Endothelial cell of umbilical vein (primary cell): ENCODE measurements at regions of chr15 and their contacts with region 1.

Region 1: DNA sequence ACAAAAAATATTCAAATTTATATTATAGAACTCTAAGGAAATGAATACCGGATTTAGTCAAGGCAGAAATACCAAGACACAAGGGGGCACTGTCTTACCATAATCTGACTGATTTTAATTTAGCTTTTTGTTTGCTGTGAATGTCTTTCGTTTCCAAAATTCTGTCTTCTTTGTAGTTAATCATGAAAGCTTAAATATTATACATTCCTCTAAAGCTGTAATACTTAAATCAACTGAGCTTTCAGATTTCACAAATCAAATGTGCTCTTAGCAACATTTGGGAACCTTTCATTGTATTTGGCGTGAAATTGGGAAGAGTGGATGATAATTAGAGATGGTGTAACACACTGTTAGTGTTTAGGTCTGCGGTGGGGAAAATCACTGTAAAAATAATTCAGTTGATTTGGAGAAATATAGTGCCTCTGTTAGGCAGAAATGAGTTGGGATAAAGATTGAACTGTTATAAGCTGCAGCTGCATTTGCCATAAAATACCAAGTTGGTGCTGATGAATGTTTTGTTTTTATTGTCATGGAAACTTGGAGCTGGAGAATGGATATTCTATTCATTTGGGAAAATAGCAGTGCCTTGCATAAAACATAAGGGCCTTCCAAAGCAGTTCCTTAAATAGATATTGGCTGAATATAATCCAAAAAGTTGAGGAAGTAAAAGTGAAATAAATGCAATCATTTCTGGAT is 228.2 kb downstream of the TCF12 start:
- DNase-seq: peak; percentile 69
- H3K4me3 ChIP-seq: no peak overlapping the region
- H3K27ac ChIP-seq: peak overlapping the region; percentile 63
- H3K4me1 ChIP-seq: peaks cover 24% of the 10 kb centered on the region
- H3K27me3 ChIP-seq: no peaks in the 10 kb centered on the region
- CTCF ChIP-seq: peak; percentile 40 to 45
- POLR2A ChIP-seq: no peak

Region 2: GRCh38 chr15:56491110-56491722 is 655.4 kb before region 1 on chr15:
- CTCF ChIA-PET with region 1: interaction called, 23 read pairs
- POLR2A ChIA-PET with region 1: no interaction called
- dilution Hi-C with region 1: no loop called
- intact Hi-C with region 1: no loop called
- DNase-seq: peak; percentile 76
- H3K4me3 ChIP-seq: no peak overlapping the region
- H3K27ac ChIP-seq: no peak overlapping the region
- H3K4me1 ChIP-seq: no peaks in the 10 kb centered on the region
- H3K27me3 ChIP-seq: peaks cover 15 to 17% of the 10 kb centered on the region in 2 experiments
- CTCF ChIP-seq: peak; percentile 85 to 94
- POLR2A ChIP-seq: no peak

Region 3: DNA sequence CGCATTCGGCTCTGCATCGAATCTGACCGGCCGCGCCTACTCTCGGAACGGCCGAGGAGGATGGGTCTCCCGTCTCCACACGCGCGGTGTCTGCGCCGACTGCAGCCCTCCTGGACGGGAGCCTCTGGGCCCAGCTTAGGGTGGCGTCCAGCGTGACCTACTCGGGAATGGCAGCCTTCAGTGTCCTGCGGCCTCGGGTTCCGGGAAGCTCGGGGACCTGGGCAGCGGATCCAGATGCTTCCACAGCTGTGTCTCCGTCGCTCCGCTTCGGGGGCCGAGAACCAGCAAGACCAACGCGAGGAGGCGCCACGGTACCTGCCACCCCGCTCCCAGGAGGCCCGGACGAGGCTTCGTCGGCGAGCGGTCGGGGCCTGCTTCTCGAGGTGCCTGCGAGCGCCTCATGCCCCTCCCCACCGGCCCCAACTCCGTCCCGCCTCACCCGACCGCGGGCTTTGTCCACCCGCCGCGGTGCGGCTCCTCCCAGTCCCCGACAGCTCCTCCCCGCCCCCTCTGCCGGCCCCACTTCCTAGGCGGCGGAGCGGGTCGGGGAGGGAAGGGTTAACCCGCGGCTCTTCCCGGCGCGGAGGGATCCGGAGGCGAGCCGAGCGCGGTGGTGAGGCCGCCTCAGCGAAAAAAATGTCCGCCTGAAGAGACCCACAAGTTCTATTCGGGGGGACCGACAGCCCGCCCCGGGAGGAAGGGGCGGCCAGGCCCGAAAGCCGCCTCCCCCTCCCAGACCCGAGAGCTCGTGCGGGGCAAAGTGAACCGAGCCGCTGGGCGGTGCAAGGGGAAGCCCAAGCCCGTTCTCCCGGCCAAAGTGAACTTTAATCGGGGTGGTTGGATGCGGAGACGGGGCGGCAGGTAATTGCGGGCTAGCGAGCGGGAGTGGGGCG is 228.4 kb before region 1 on chr15 and contains the start of gene TCF12:
- CTCF ChIA-PET with region 1: interaction called, 18 read pairs
- POLR2A ChIA-PET with region 1: interaction called, 4 read pairs
- dilution Hi-C with region 1: no loop called
- intact Hi-C with region 1: no loop called
- DNase-seq: peak; percentile 94
- H3K4me3 ChIP-seq: peak within 1 kb of the TSS; percentile 87 to 98 (median 87)
- H3K27ac ChIP-seq: peak within 1 kb of the TSS; percentile 86
- H3K4me1 ChIP-seq: peaks cover 42% of the 10 kb centered on the region
- H3K27me3 ChIP-seq: no peaks in the 10 kb centered on the region
- CTCF ChIP-seq: peak; percentile 11 to 51
- POLR2A ChIP-seq: peak; percentile 45
- total RNA-seq, gene TCF12: 127 and 133 TPM in 2 replicates

Region 4: DNA sequence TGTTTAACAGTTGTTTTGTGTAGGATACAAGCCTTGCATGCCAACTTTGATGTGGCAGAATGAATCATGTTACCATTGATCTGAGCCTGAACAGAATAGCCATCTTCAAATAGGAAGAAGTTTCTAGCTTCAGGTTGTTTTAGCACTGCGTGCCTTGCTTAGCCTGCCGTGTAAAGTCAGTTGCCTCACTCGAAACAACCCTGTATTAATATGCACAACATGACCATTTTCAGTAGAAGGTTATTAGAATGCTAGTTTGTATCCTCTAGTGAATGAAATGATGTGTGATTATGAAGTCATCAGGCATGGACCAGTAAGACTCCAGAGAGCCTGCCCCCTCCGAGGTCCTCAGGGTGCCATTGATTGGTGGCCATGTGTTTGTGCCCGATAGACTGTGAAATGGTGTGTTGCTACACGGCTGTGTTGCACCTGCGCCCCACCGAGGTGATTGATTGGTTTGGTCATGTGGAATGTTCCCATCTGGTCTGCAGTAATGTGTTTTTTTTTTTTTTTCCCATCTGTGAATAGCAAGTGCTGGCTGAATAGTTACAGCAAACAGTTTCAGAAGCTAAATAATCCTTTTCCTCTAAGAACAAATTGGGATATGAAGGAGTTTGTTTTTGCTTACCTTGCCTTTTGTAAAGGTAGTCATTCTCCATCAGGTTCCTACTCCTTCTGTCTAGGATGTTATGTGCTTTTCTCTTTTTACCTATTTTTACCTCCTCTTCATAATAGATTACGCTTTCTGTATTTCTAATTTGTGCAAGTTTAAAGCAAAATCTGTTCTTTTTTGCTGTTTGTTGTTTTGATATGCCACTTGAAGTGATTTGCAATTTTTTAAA is 13.3 kb before region 1 on chr15:
- CTCF ChIA-PET with region 1: interaction called, 13 read pairs
- POLR2A ChIA-PET with region 1: interaction called, 3 read pairs
- dilution Hi-C with region 1: no loop called
- intact Hi-C with region 1: no loop called
- DNase-seq: peak; percentile 57
- H3K4me3 ChIP-seq: no peak overlapping the region
- H3K27ac ChIP-seq: no peak overlapping the region
- H3K4me1 ChIP-seq: peaks cover 43% of the 10 kb centered on the region
- H3K27me3 ChIP-seq: no peaks in the 10 kb centered on the region
- CTCF ChIP-seq: no peak
- POLR2A ChIP-seq: no peak

Region 5: GRCh38 chr15:57198654-57199291 is 52.1 kb after region 1 on chr15:
- CTCF ChIA-PET with region 1: interaction called, 10 read pairs
- POLR2A ChIA-PET with region 1: no interaction called
- dilution Hi-C with region 1: no loop called
- intact Hi-C with region 1: no loop called
- DNase-seq: peak; percentile 67
- H3K4me3 ChIP-seq: no peak overlapping the region
- H3K27ac ChIP-seq: no peak overlapping the region
- H3K4me1 ChIP-seq: peaks cover 12% of the 10 kb centered on the region
- H3K27me3 ChIP-seq: no peaks in the 10 kb centered on the region
- CTCF ChIP-seq: no peak
- POLR2A ChIP-seq: no peak

Region 6: GRCh38 chr15:57306161-57306943 is 159.7 kb after region 1 on chr15:
- CTCF ChIA-PET with region 1: interaction called, 93 read pairs
- POLR2A ChIA-PET with region 1: no interaction called
- dilution Hi-C with region 1: no loop called
- intact Hi-C with region 1: loop called (anchors 1 kb)
- DNase-seq: peak; percentile 53
- H3K4me3 ChIP-seq: peak overlapping the region; percentile 33 to 39 (median 35)
- H3K27ac ChIP-seq: peak overlapping the region; percentile 32
- H3K4me1 ChIP-seq: peaks cover 11% of the 10 kb centered on the region
- H3K27me3 ChIP-seq: no peaks in the 10 kb centered on the region
- CTCF ChIP-seq: peak; percentile 90 to 91
- POLR2A ChIP-seq: no peak

Region 7: GRCh38 chr15:57541805-57542504 is 395.3 kb after region 1 on chr15:
- CTCF ChIA-PET with region 1: interaction called, 31 read pairs
- POLR2A ChIA-PET with region 1: no interaction called
- dilution Hi-C with region 1: no loop called
- intact Hi-C with region 1: loop called (anchors 5 kb)
- DNase-seq: peak; percentile 77
- H3K4me3 ChIP-seq: no peak overlapping the region
- H3K27ac ChIP-seq: no peak overlapping the region
- H3K4me1 ChIP-seq: peaks cover 6% of the 10 kb centered on the region
- H3K27me3 ChIP-seq: no peaks in the 10 kb centered on the region
- CTCF ChIP-seq: peak; percentile 82 to 91
- POLR2A ChIP-seq: no peak